ENCODE measurements at regions of chr17 and their contacts with region 1.

Region 1: GRCh38 chr17:82791532-82791931 is 39.7 kb downstream of the TBCD start:
- DNase-seq: no peak
- ATAC-seq: no peak
- H3K4me3 ChIP-seq: no peak overlapping the region
- H3K4me3 Mint-ChIP-seq: no peak overlapping the region
- H3K27ac ChIP-seq: no peak overlapping the region
- H3K27ac Mint-ChIP-seq: no peak overlapping the region
- H3K4me1 ChIP-seq: no peaks in the 10 kb centered on the region
- H3K4me1 Mint-ChIP-seq: peaks cover 2% of the 10 kb centered on the region
- H3K27me3 ChIP-seq: no peaks in the 10 kb centered on the region
- H3K27me3 Mint-ChIP-seq: no peaks in the 10 kb centered on the region
- CTCF ChIP-seq: no peak

Region 2: DNA sequence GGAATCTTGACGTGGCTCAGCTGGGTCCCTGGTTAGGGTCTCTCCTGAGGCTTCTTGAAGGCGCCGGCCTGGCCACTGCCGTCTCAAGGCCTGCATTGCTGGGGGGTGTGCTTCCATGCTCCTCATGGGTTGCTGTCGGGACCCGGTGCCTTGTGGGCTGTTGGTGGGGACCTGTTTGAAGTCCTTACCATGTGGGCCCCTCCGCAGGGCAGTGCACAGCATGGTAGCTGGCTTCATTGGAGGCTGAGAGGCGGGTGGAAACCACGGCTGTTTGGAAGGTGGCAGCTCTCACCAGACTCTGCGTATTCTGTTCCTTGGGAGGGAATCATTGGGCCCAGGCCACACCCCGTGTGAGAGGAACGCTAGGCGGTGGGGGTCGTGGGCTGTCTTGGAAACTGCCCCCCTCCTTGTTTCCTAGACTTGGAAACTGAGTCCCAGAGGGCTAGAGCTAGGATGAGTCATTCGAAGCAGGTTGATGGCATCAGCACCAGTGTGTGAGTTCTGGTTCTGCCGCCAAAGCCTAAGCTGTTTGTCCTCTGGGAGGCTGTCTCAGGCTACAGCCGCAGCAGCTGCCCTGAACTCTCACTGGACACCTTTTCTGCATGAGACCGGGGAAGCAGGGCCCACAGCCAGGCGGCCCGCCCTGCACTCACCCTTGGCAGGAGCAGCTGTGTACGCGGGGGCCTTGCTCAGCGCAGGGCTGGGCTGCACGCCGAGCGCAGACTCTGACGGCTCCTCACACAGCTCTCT is 13.1 kb after region 1 on chr17:
- CTCF ChIA-PET with region 1: no interaction called
- POLR2A ChIA-PET with region 1: no interaction called
- intact Hi-C with region 1: no loop called
- DNase-seq: no peak
- ATAC-seq: no peak
- H3K4me3 ChIP-seq: no peak overlapping the region
- H3K4me3 Mint-ChIP-seq: no peak overlapping the region
- H3K27ac ChIP-seq: no peak overlapping the region
- H3K27ac Mint-ChIP-seq: no peak overlapping the region
- H3K4me1 ChIP-seq: no peaks in the 10 kb centered on the region
- H3K4me1 Mint-ChIP-seq: peaks cover 3% of the 10 kb centered on the region
- H3K27me3 ChIP-seq: no peaks in the 10 kb centered on the region
- H3K27me3 Mint-ChIP-seq: no peaks in the 10 kb centered on the region
- CTCF ChIP-seq: no peak

Region 3: DNA sequence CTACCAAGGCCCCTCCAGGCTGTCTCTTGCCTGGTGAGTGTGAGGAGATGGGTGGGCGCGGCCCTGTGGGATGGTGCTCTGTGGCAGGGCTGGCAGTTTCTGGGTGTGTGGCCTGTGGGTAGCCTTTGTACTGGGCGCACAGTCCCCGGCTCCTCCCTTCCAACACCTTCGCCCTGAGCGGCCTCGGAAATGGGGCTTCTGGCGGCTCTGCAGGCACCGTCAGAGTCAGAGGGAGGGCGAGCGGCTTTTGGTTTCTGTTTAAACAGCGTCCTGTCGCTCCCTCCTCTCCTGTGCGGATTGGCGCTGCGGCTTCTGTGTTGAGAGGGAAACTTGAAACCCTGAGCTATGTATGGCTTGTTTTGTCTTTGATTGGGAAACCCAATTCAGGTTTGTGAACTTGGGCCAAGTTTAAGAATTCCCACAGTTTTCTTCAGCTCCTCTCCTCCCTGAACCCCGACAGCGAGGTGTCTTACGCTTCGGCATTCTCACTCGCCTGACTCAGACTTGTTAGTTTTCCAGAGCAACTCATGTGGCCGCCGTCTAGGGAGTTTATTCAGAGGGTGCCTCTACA is 56.6 kb after region 1 on chr17:
- CTCF ChIA-PET with region 1: no interaction called
- POLR2A ChIA-PET with region 1: no interaction called
- intact Hi-C with region 1: loop called in 1 of 2 experiments (anchors 10 kb)
- DNase-seq: peak in 8 of 9 experiments; percentile 38 to 84 (median 61)
- ATAC-seq: peak; percentile 94
- H3K4me3 ChIP-seq: peak overlapping the region in 1 of 2 experiments; percentile 37
- H3K4me3 Mint-ChIP-seq: peak overlapping the region; percentile 65
- H3K27ac ChIP-seq: peak overlapping the region; percentile 20 to 59
- H3K27ac Mint-ChIP-seq: peak overlapping the region; percentile 67
- H3K4me1 ChIP-seq: no peaks in the 10 kb centered on the region
- H3K4me1 Mint-ChIP-seq: peaks cover 11% of the 10 kb centered on the region
- H3K27me3 ChIP-seq: no peaks in the 10 kb centered on the region
- H3K27me3 Mint-ChIP-seq: no peaks in the 10 kb centered on the region
- CTCF ChIP-seq: no peak

Measured in CD8-positive, alpha-beta T cell (primary cell).